HCT116 (cell line): ENCODE measurements at regions of chr12 and their contacts with region 1.

Region 1: GRCh38 chr12:9331218-9331626 is 123.0 kb upstream of the PZP start:
- DNase-seq: peak; percentile 21
- ATAC-seq: peak; percentile 96
- H3K4me3 ChIP-seq: no peak overlapping the region
- H3K27ac ChIP-seq: no peak overlapping the region
- H3K4me1 ChIP-seq: no peaks in the 10 kb centered on the region
- H3K27me3 ChIP-seq: no peaks in the 10 kb centered on the region
- CTCF ChIP-seq: peak; percentile 70 to 100 (median 99)
- POLR2A ChIP-seq: no peak
- RAD21 ChIP-seq: peak; percentile 88

Region 2: GRCh38 chr12:9464408-9464807 is 133.2 kb after region 1 on chr12:
- CTCF ChIA-PET with region 1: interaction called, 11 read pairs
- POLR2A ChIA-PET with region 1: no interaction called
- RAD21 ChIA-PET with region 1: no interaction called
- intact Hi-C with region 1: no loop called
- DNase-seq: no peak
- ATAC-seq: no peak
- H3K4me3 ChIP-seq: no peak overlapping the region
- H3K27ac ChIP-seq: no peak overlapping the region
- H3K4me1 ChIP-seq: no peaks in the 10 kb centered on the region
- H3K27me3 ChIP-seq: no peaks in the 10 kb centered on the region
- CTCF ChIP-seq: no peak
- POLR2A ChIP-seq: no peak
- RAD21 ChIP-seq: no peak

Region 3: GRCh38 chr12:9634177-9634803 is 303.1 kb after region 1 on chr12:
- CTCF ChIA-PET with region 1: no interaction called
- POLR2A ChIA-PET with region 1: no interaction called
- RAD21 ChIA-PET with region 1: no interaction called
- intact Hi-C with region 1: loop called (anchors 5 kb)
- DNase-seq: no peak
- ATAC-seq: peak; percentile 70
- H3K4me3 ChIP-seq: no peak overlapping the region
- H3K27ac ChIP-seq: no peak overlapping the region
- H3K4me1 ChIP-seq: no peaks in the 10 kb centered on the region
- H3K27me3 ChIP-seq: no peaks in the 10 kb centered on the region
- CTCF ChIP-seq: peak; percentile 62 to 81 (median 73)
- POLR2A ChIP-seq: no peak
- RAD21 ChIP-seq: peak; percentile 77

Region 4: DNA sequence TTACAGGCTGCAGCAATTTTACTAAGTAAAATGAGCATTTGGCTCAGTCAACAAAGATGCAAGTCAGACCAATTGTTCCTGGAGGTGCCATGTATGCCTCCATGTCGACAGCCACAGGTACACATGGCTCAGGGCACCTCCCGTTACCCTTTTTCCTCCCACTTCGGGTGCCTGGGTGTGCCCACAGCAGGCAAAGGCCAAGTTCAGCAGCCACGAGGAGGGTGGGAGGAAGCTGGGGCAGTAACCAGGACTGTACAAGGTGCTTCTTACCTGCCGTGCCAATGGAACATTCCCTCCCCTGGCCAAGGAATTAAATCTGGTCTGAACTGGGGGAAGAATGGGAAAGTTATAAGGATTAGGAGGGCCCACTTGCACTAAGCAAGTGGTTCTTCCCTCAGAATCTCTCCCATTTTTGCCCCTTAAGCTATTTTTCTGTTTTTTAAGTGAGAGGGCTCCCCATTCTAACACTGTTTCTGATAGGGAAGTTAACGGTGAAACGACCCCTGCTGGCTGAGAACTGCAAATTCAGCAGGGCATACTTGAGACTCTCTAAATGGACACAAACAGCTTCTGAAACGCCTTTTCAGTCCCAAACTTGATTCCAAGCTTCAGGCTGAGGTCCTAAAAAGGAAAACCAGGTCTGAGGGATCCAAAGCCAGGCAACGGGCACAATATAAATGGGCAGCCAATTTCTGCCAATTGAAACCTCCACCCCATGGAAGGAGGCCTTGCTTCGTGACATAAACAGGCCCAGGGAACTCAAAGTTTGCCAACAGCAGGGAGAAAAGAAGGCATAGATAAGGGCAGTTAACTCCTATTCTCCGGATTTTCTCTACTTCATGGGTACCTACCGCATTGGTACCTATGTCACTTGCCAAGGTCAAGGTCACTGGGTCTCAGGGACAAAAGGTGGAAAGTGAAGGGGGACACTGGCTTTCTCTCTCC is 376.9 kb after region 1 on chr12:
- CTCF ChIA-PET with region 1: interaction called, 3 read pairs
- POLR2A ChIA-PET with region 1: no interaction called
- RAD21 ChIA-PET with region 1: no interaction called
- intact Hi-C with region 1: loop called (anchors 1 kb)
- DNase-seq: peak; percentile 37
- ATAC-seq: peak; percentile 92
- H3K4me3 ChIP-seq: no peak overlapping the region
- H3K27ac ChIP-seq: no peak overlapping the region
- H3K4me1 ChIP-seq: no peaks in the 10 kb centered on the region
- H3K27me3 ChIP-seq: no peaks in the 10 kb centered on the region
- CTCF ChIP-seq: peak; percentile 72 to 88 (median 88)
- POLR2A ChIP-seq: no peak
- RAD21 ChIP-seq: peak; percentile 64

Region 5: DNA sequence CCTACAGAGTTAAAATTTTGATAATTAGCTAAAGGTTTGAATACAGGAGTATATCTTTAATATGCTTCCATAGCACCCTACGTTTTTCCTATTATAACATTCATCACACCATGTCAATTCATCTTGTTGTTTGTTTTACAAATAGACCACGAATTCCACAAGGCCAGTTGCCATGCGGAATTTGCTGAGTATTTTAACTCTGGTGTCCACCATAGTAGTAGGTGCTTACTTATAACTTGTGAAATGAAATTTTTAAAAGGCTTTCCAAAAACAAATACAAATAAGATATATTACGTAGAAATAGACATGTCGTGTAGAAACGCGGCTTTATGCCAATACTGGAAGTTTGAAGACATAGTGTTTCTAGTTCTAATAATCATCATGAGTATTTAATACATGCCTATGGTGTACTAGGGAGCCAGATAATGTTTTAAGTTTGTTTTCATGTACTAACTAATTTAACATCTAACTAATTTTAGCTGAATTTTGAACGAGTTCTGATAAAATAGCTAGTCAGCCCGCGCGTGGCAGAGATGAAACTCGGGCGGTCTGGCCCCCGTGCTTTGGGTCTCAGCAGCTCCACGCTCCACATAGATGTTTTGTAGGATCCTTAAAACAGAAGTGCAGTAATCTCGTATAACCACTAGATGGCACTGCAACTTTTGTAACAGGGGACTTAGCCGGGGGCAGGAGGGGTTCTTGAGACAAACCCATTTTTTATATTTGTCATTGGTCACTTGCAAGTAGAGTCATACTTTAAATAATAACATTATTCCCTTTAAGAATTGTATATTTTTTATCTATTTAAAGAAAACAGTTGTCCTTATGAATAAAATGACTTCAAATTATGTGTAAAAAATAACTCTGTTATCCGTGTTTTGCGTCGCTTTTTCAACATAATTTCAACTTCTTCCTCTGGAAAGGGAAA is 419.3 kb after region 1 on chr12:
- CTCF ChIA-PET with region 1: interaction called, 14 read pairs
- POLR2A ChIA-PET with region 1: no interaction called
- RAD21 ChIA-PET with region 1: no interaction called
- intact Hi-C with region 1: no loop called
- DNase-seq: peak; percentile 46
- ATAC-seq: peak; percentile 87
- H3K4me3 ChIP-seq: no peak overlapping the region
- H3K27ac ChIP-seq: no peak overlapping the region
- H3K4me1 ChIP-seq: peaks cover 0 to 3% of the 10 kb centered on the region in 2 experiments; a peak in 2 of 4 replicates
- H3K27me3 ChIP-seq: peaks cover 23% of the 10 kb centered on the region
- CTCF ChIP-seq: peak; percentile 70 to 78 (median 72); a peak in 5 of 6 replicates
- POLR2A ChIP-seq: no peak
- RAD21 ChIP-seq: peak; percentile 64

Region 6: DNA sequence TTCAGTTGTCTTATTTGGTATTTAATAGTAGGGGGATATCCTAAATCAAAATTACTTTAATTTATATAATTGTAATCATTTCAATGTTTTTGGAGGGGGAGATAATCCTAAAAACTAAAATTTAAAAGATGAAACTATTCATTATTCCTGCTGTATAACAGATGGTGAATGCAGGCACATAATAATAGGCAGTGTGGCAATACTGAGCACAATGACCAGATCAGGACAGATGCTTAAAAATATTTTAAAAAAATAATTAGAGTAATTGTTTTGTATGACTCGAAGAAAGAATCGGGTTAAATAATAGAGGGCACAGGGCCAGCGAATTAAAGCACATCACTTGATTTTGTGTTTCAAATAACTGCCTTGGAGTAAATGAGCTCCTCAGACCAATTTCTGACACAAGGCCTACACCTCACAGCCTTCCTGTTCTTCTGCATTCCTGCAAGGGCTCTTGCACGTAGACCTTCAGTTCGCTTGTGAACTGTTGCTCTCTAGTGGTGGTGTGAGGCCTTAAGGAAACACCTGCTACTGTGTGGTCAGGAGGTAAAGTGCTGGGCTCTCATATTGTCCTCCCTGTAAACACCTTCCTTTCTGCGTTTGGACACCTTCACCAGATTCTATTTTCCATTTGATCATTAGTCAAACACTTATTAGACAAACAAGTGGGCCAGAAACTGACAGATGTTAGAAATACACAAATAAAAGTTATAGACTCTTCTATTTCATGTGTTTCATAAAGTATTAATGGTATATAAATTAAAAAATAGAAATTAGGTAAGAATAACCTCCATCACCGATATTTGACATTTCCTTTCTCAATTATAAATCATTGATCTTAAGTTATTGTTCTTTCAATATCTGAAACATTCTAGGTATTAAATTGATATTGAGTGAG is 466.7 kb after region 1 on chr12:
- CTCF ChIA-PET with region 1: interaction called, 5 read pairs
- POLR2A ChIA-PET with region 1: no interaction called
- RAD21 ChIA-PET with region 1: no interaction called
- intact Hi-C with region 1: loop called (anchors 2 kb)
- DNase-seq: peak; percentile 71
- ATAC-seq: peak; percentile 93
- H3K4me3 ChIP-seq: no peak overlapping the region
- H3K27ac ChIP-seq: no peak overlapping the region
- H3K4me1 ChIP-seq: no peaks in the 10 kb centered on the region
- H3K27me3 ChIP-seq: peaks cover 36% of the 10 kb centered on the region
- CTCF ChIP-seq: peak; percentile 50 to 57 (median 53)
- POLR2A ChIP-seq: no peak
- RAD21 ChIP-seq: peak; percentile 77

Region 7: DNA sequence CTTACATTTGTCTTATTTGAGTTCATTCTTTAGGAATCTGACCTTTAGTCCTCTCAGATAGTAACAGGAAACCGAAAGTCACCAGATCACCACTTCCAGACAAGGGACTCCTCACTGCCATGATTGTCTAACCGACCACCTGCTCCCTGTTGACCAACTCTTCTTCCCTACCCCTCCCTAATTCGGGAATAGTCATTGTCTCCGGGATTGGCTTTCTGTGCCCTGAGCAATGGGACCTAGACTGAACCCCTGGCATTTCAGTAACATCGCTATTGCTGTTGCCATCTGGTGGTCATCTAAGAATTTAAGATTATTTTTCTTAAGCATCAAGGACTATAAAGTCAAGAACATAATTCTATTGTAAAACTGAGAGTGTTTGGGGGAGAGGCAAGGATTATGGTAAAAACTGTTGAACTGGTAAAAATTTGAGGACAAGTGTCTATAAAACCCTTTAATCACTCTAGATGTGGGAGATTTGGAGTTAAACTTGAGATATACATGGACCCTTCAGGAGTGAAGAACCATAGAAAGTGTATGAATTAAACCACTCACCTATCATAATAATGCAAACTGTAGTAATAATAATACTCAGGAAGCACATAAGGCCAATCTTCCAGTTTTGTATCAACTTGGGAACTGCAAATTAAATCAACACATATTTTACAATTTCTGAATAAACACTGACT is 594.6 kb after region 1 on chr12:
- CTCF ChIA-PET with region 1: no interaction called
- POLR2A ChIA-PET with region 1: no interaction called
- RAD21 ChIA-PET with region 1: no interaction called
- intact Hi-C with region 1: loop called (anchors 5 kb)
- DNase-seq: peak; percentile 24
- ATAC-seq: peak; percentile 73
- H3K4me3 ChIP-seq: no peak overlapping the region
- H3K27ac ChIP-seq: no peak overlapping the region
- H3K4me1 ChIP-seq: no peaks in the 10 kb centered on the region
- H3K27me3 ChIP-seq: peaks cover 30% of the 10 kb centered on the region
- CTCF ChIP-seq: peak; percentile 43 to 50 (median 47); a peak in 5 of 6 replicates
- POLR2A ChIP-seq: no peak
- RAD21 ChIP-seq: peak; percentile 47

Region 8: GRCh38 chr12:10220398-10221077 is 889.3 kb after region 1 on chr12:
- CTCF ChIA-PET with region 1: no interaction called
- POLR2A ChIA-PET with region 1: no interaction called
- RAD21 ChIA-PET with region 1: no interaction called
- intact Hi-C with region 1: no loop called
- DNase-seq: no peak
- ATAC-seq: no peak
- H3K4me3 ChIP-seq: no peak overlapping the region
- H3K27ac ChIP-seq: no peak overlapping the region
- H3K4me1 ChIP-seq: peaks cover 1 to 5% of the 10 kb centered on the region in 2 experiments; a peak in 3 of 4 replicates
- H3K27me3 ChIP-seq: no peaks in the 10 kb centered on the region
- CTCF ChIP-seq: no peak
- POLR2A ChIP-seq: no peak
- RAD21 ChIP-seq: no peak